ENCODE measurements at regions of chr10 and their contacts with region 1.

Region 1: GRCh38 chr10:106705681-106706100 is 458.8 kb downstream of the SORCS1 start:
- DNase-seq: peak; percentile 61
- H3K4me3 ChIP-seq: no peak overlapping the region; a peak in 1 of 4 replicates
- H3K27ac ChIP-seq: peak overlapping the region in 1 of 2 experiments; percentile 39; a peak in 1 of 4 replicates
- H3K4me1 ChIP-seq: peaks cover 0 to 15% of the 10 kb centered on the region in 2 experiments; a peak in 2 of 4 replicates
- H3K27me3 ChIP-seq: no peaks in the 10 kb centered on the region
- CTCF ChIP-seq: peak; percentile 79
- EP300 ChIP-seq: no peak
- RAD21 ChIP-seq: peak; percentile 90

Region 2: GRCh38 chr10:106609470-106610266 is 96.0 kb before region 1 on chr10:
- CTCF ChIA-PET with region 1: no interaction called
- POLR2A ChIA-PET with region 1: no interaction called
- DNase-seq: peak; percentile 8
- H3K4me3 ChIP-seq: no peak overlapping the region
- H3K27ac ChIP-seq: no peak overlapping the region
- H3K4me1 ChIP-seq: no peaks in the 10 kb centered on the region
- H3K27me3 ChIP-seq: no peaks in the 10 kb centered on the region
- CTCF ChIP-seq: peak; percentile 27
- EP300 ChIP-seq: no peak
- RAD21 ChIP-seq: no peak

Region 3: DNA sequence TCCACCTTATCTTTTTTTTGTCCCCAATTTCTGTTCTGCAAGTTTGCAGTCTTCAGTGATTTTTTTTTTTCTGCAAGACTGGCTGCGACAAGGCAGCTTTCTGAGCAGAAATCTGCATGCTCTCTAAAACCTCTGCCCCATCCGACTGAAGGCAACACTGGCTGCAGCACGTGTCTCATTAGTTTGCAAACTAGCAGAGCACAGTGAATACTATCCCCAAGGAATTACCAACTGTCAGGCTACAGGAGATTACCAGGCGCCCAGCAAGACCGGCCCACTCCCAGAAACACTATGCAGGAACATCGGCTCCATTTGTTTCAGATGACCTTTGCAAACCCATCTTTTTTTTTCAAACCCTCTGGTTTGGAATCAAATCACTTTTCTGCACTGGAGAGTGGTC is 79.9 kb before region 1 on chr10:
- CTCF ChIA-PET with region 1: interaction called, 12 read pairs
- POLR2A ChIA-PET with region 1: no interaction called
- DNase-seq: no peak
- H3K4me3 ChIP-seq: no peak overlapping the region
- H3K27ac ChIP-seq: peak overlapping the region in 1 of 2 experiments; percentile 59; a peak in 2 of 4 replicates
- H3K4me1 ChIP-seq: peaks cover 0 to 14% of the 10 kb centered on the region in 2 experiments; a peak in 2 of 4 replicates
- H3K27me3 ChIP-seq: no peaks in the 10 kb centered on the region
- CTCF ChIP-seq: no peak
- EP300 ChIP-seq: no peak
- RAD21 ChIP-seq: no peak

Region 4: DNA sequence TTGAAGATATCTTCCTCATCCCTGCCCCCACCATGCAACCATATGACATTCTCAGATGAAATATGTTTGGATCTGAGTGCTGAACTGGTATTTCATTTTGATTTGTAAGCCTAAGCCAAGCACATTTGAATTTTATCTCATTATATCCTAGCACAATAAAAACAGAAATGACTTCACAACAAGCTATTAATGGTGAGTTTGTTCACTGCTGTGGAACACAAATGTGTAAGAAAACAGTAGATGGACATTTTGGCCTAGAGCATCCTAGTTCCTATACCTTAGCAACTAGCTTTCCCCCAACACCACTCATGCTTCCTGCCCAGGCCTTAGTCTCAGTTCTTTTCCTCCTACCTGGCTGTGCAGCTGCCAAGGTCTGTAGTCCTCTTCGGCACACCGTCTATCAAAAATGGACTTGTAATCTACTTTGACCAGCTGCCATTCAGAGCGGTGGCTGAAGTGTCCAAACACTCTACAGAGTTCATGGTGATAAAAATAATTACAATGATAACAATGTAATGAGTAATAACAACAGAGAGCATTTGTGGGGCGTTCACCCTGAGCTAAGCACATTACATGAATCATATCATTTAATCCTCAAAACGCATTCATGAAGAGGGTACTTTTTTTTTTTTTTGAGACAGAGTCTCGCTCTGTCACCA is 33.0 kb before region 1 on chr10:
- CTCF ChIA-PET with region 1: interaction called, 10 read pairs
- POLR2A ChIA-PET with region 1: no interaction called
- DNase-seq: no peak
- H3K4me3 ChIP-seq: no peak overlapping the region
- H3K27ac ChIP-seq: no peak overlapping the region
- H3K4me1 ChIP-seq: peaks cover 0 to 2% of the 10 kb centered on the region in 2 experiments; a peak in 1 of 4 replicates
- H3K27me3 ChIP-seq: no peaks in the 10 kb centered on the region
- CTCF ChIP-seq: no peak
- EP300 ChIP-seq: no peak
- RAD21 ChIP-seq: no peak

Region 5: GRCh38 chr10:106765241-106765754 is 59.6 kb after region 1 on chr10:
- CTCF ChIA-PET with region 1: interaction called, 11 read pairs
- POLR2A ChIA-PET with region 1: no interaction called
- DNase-seq: no peak
- H3K4me3 ChIP-seq: no peak overlapping the region
- H3K27ac ChIP-seq: no peak overlapping the region
- H3K4me1 ChIP-seq: peaks cover 0 to 13% of the 10 kb centered on the region in 2 experiments; a peak in 2 of 4 replicates
- H3K27me3 ChIP-seq: no peaks in the 10 kb centered on the region
- CTCF ChIP-seq: no peak
- EP300 ChIP-seq: no peak
- RAD21 ChIP-seq: no peak; the same call in 1 of the 2 replicates

Region 6: DNA sequence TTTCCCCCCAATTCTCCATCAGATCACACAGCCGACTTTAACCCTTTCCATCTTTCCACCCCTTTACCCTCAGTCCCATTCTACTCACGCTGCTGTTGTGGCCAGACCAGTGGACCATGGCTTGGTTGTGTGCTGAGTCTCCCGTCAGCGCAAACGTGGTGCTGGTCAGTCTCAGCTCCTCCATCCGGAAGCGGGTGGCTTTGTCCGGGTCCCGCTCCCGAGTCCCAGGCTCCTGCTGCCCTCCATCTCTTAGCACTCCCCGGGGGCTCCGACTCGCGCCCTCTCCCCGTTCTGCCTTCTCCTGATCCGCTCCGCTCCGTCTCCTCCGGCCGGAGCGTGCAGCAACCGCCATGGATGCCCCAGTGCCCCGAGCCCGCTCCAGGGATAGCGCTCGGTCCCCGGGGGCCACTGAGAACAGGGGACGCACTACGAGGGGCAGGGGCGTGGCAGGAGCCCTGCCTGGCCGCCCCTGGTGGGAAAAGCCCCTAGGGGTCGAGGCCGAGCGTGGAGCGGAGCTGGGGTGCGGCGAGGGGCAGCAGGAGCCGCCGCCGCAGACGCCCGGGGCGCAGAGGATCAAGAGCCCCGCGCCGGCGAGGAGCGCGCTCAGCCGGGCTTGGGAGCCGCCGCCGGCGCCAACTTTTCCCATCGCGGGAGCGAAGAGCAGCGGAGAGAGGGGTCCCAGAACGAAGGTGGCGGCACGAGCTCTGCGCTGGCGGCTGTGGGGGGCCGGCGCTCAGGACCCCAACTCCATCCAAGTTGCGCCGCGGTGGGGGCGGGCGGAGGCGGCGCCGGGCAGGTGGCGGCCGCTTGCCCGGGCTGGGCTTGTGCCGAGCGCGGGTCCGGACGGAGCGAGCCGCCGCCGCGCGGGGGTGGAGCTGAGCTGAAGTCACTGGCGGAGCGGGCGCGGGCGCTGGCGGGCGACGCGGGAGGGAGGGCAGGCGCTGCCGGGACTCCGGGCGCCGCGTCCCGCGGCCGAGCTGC is 458.5 kb after region 1 on chr10 and contains the start of gene SORCS1:
- CTCF ChIA-PET with region 1: interaction called, 13 read pairs
- POLR2A ChIA-PET with region 1: interaction called, 4 read pairs
- DNase-seq: peak; percentile 88
- H3K4me3 ChIP-seq: peak within 1 kb of the TSS; percentile 9 to 61; a peak in 3 of 4 replicates
- H3K27ac ChIP-seq: peak within 1 kb of the TSS in 1 of 2 experiments; percentile 93; a peak in 2 of 4 replicates
- H3K4me1 ChIP-seq: peaks cover 0 to 8% of the 10 kb centered on the region in 2 experiments; a peak in 2 of 4 replicates
- H3K27me3 ChIP-seq: peaks cover 10% of the 10 kb centered on the region; the same call in 1 of the 2 replicates
- CTCF ChIP-seq: no peak
- EP300 ChIP-seq: no peak
- RAD21 ChIP-seq: no peak
- polyA plus RNA-seq, gene SORCS1: 0.66 and 2.4 TPM in 2 replicates

Region 7: DNA sequence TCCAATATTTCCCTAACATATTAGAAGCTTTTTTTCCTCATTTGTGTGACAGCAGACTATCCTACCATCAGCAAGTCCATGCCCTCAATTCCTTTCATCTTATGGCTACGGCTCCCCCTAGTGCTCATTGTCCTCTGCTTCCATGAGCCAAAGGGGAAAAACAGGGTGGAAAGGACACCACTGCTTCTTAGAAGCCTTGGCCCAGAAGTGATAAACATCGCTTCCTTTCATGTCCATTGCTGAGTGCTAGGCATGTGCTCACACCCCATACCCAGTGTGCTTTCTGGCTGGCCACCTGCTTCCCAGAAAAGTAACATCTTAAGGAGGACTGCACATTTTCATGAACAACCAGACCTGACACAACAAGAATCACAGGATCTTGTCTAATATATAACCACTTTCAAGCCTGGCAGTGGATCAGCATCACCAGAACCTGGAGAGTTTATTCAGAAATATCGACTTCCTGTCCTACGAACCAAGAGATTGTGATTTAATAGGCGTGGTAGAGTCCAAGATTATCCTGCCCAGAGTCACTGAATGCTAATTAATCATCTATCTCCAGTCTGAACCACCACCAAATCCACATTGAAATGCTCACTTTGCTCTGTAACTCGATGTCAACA is 1109.3 kb after region 1 on chr10:
- CTCF ChIA-PET with region 1: interaction called, 18 read pairs
- POLR2A ChIA-PET with region 1: no interaction called
- DNase-seq: peak; percentile 54
- H3K4me3 ChIP-seq: peak overlapping the region in 1 of 2 experiments; percentile 27; a peak in 1 of 4 replicates
- H3K27ac ChIP-seq: no peak overlapping the region; a peak in 1 of 4 replicates
- H3K4me1 ChIP-seq: peaks cover 0 to 2% of the 10 kb centered on the region in 2 experiments; a peak in 1 of 4 replicates
- H3K27me3 ChIP-seq: no peaks in the 10 kb centered on the region
- CTCF ChIP-seq: peak; percentile 81
- EP300 ChIP-seq: no peak
- RAD21 ChIP-seq: peak; percentile 93

Measured in SK-N-SH (cell line).